ENCODE measurements at regions of chr12 and their contacts with region 1.

Region 1: DNA sequence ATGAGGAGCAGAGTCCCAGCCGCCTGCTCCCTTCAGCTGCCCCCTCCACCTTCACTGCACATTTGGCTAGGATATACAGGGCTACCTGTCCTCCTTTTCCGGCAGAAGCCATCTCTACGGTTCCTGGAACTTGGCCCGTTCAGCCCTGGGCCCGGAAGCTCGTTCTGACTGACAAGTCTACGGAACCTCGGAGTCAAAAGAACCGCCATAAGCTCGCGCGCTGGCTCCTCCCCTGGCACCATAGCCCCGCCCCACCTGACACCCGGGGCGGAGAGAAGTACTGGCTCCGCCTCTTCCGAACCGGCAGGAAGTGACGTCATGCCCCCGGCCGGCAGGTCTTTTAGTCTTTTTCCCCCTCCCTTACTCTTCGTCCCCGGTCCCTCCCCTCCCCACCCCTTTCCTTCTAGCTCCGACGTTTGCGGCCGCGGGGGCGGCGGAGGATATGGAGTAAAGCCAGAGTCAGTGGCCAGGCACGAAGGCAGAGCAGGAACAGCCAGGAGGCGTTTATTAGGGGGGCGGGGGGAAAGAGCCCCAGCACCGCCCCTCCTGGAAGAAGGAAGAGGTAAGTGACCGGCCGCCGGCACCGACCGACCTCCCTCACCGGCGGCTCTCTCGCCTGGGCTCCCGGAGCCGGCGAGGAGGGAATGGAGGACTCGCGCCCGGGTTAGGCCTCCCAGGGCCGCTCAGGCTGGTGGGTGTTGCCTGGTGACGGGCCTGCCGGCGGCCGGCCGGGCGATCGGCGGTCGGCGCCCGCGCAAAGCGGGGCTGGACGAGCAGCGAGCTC is at the starts of genes DEPDC4 and SCYL2:
- DNase-seq: peak; percentile 89 to 99
- H3K4me3 ChIP-seq: peak within 1 kb of the TSS; percentile 77 to 94 (median 84)
- H3K27ac ChIP-seq: peak within 1 kb of the TSS; percentile 74
- H3K4me1 ChIP-seq: peaks cover 0 to 9% (median 3%) of the 10 kb centered on the region in 4 experiments; a peak in 3 of 7 replicates
- H3K27me3 ChIP-seq: no peaks in the 10 kb centered on the region
- CTCF ChIP-seq: no peak
- EP300 ChIP-seq: 0 out of 3 replicates have a peak, but pooled peaks of 1 of the 2 experiments have one; percentile 3
- POLR2A ChIP-seq: peak in 1 of 2 experiments; percentile 21; a peak in 2 of 3 replicates
- RAD21 ChIP-seq: no peak
- total RNA-seq, gene DEPDC4: 3.8 and 4.8 TPM in 2 replicates
- total RNA-seq, gene SCYL2: 45.0 and 48.7 TPM in 2 replicates

Region 2: GRCh38 chr12:100254876-100255275 is 12.2 kb before region 1 on chr12:
- CTCF ChIA-PET with region 1: no interaction called
- POLR2A ChIA-PET with region 1: interaction called, 10 read pairs
- DNase-seq: no peak
- H3K4me3 ChIP-seq: no peak overlapping the region
- H3K27ac ChIP-seq: no peak overlapping the region
- H3K4me1 ChIP-seq: no peaks in the 10 kb centered on the region
- H3K27me3 ChIP-seq: no peaks in the 10 kb centered on the region
- CTCF ChIP-seq: no peak
- EP300 ChIP-seq: no peak
- POLR2A ChIP-seq: no peak
- RAD21 ChIP-seq: no peak

Region 3: GRCh38 chr12:100279607-100280244 is 12.7 kb after region 1 on chr12:
- CTCF ChIA-PET with region 1: interaction called, 6 read pairs
- POLR2A ChIA-PET with region 1: interaction called, 11 read pairs
- DNase-seq: no peak
- H3K4me3 ChIP-seq: no peak overlapping the region
- H3K27ac ChIP-seq: no peak overlapping the region
- H3K4me1 ChIP-seq: peaks cover 0 to 5% (median 3%) of the 10 kb centered on the region in 4 experiments; a peak in 3 of 7 replicates
- H3K27me3 ChIP-seq: no peaks in the 10 kb centered on the region
- CTCF ChIP-seq: no peak
- EP300 ChIP-seq: no peak
- POLR2A ChIP-seq: no peak
- RAD21 ChIP-seq: no peak

Region 4: DNA sequence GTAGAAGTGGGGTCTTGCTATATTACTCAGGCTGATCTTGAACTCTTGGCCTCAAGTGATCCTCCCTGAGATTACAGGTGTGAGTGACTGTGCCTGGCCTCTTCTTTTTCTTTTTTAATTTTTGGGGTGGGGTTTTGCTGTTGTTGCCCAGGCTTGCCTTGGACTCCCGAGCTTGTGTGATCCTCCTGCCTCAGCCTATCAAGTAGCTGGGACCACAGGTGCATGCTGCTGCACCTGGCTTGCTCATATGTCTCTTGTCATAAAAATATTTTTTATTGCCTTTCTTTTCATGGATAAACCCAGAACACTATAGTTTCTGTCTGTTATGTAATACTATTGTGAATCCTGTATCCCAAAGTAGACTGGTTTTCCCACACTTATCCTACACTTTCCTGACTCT is 26.0 kb after region 1 on chr12:
- CTCF ChIA-PET with region 1: no interaction called
- POLR2A ChIA-PET with region 1: no interaction called
- DNase-seq: no peak
- H3K4me3 ChIP-seq: no peak overlapping the region
- H3K27ac ChIP-seq: no peak overlapping the region
- H3K4me1 ChIP-seq: no peaks in the 10 kb centered on the region
- H3K27me3 ChIP-seq: no peaks in the 10 kb centered on the region
- CTCF ChIP-seq: no peak
- EP300 ChIP-seq: no peak
- POLR2A ChIP-seq: no peak
- RAD21 ChIP-seq: no peak

Measured in H1 (cell line).